Astrocyte of the cerebellum (primary cell): ENCODE measurements at regions of chr20 and their contacts with region 1.

Region 1: DNA sequence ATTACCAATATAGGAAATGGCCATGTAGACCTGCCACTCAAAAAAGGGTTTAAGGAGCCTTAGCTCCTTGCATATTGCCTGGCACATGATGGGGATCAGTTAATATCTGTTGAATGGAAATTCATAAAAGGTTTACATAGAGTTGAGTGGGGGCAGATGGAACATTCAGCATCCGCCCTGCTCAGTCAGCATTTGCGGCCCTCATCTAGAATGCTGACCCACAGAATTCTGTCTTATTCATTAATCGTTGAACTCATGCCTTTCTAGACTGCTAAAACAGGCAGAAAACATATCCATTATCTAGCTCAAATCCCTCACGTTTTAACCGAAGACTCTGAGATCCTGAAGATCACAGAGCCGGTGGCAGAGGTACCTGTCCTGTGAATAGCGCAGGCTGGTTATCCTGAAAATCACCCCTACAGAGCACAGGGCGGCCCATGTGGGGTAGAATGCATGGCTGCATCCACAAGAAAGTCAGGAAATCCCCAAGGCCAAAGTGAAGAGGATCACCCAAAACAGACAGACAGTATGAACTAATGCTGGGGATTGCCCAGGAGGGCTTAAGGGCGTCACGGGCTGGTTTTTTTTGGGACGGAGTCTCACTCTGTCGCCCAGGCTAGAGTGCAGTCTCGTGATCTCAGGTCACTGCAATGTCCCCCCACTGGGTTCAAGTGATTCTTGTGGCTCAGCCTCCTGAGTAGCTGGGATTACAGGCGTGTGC is 59.9 kb downstream of the CNBD2 start:
- DNase-seq: no peak
- H3K4me3 ChIP-seq: no peak overlapping the region
- CTCF ChIP-seq: no peak

Region 2: GRCh38 chr20:35947489-35947888 is 80.8 kb before region 1 on chr20:
- in situ Hi-C with region 1: no loop called
- DNase-seq: no peak
- H3K4me3 ChIP-seq: no peak overlapping the region
- CTCF ChIP-seq: peak; percentile 46

Region 3: DNA sequence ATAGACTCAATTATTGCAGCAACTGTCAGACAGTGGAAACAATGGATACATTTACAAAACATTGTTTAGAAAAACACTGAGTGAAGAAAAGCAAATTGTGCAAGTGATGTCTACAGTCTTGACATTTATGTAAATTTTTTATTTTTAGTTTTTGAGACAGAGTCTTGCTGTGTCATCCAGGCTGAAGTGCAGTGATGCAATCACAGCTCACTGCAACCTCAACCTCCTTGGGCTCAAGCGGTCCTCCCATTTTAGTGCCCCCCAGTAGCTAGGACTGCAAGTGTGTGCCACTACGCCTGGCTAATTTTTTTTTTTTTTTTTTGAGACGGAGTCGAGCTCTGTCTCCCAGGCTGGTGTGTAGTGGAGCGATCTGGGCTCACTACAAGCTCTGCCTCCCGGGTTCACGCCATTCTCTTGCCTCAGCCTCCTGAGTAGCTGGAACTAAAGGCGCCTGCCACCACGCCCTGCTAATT is 50.2 kb before region 1 on chr20:
- in situ Hi-C with region 1: loop called (anchors 5 kb)
- DNase-seq: no peak
- H3K4me3 ChIP-seq: no peak overlapping the region
- CTCF ChIP-seq: no peak

Region 4: GRCh38 chr20:36113566-36114250 is 85.4 kb after region 1 on chr20:
- in situ Hi-C with region 1: loop called (anchors 5 kb)
- DNase-seq: no peak
- H3K4me3 ChIP-seq: no peak overlapping the region
- CTCF ChIP-seq: no peak